Ascending aorta (tissue), 2 donors: ENCODE measurements at regions of chr12 and their contacts with region 1.

Region 1: GRCh38 chr12:810671-811415 is 58.5 kb downstream of the WNK1 start:
- DNase-seq: no peak
- H3K4me3 ChIP-seq: no peak overlapping the region
- H3K27ac ChIP-seq: no peak overlapping the region
- H3K4me1 ChIP-seq: peaks cover 2 to 28% of the 10 kb centered on the region in 2 donors
- H3K27me3 ChIP-seq: no peaks in the 10 kb centered on the region
- CTCF ChIP-seq: no peak

Region 2: DNA sequence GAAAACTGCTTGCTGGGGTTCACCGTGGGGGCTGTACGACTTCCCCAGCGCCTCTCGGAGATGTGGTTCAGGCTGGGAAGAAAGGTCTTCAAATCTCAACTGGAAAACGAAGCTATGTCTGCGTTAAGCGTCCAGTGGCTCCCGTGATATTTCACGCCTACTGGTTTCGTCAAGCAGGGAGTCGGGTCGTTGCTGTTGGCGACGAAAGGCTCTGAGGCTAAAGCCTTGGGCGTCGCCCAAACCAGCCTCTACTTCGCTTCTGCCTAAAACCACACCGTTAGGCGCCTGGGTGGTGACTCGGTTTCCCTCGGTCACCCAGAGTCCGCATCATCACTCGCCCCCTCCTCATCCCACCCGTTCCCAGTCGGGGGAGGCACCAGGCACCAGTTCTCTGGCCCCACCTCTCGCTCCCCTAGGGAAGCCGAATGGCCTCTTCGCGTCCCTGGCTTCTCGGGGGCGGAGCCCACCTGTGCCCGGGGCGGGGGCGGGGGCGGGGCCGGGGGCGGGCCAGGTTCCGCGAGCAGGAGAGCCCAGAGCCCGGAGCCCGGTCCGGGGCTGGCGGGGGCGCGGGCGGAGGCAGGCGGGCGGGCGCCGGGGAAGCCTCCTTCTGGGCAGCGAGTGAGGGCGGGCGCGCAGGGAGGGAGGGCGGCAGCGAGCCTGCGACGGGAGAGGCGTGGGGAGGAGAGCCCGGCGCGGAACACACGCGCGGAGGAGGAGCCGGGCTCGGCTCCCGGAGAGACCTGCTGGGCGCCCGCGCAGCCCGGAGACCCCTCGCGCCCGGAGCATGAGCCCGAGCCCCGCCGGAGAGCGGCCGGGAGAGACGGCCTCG is 351.2 kb before region 1 on chr12 and contains the start of gene B4GALNT3:
- intact Hi-C with region 1: loop called (anchors 10 kb)
- DNase-seq: peak; percentile 23 to 86
- H3K4me3 ChIP-seq: peak within 1 kb of the TSS; percentile 85 to 92
- H3K27ac ChIP-seq: peak within 1 kb of the TSS; percentile 81 to 90
- H3K4me1 ChIP-seq: peaks cover 5 to 12% of the 10 kb centered on the region in 2 donors
- H3K27me3 ChIP-seq: no peaks in the 10 kb centered on the region
- CTCF ChIP-seq: no peak
- total RNA-seq, gene B4GALNT3: 10.4 TPM

Region 3: GRCh38 chr12:569803-570434 is 240.9 kb before region 1 on chr12:
- intact Hi-C with region 1: loop called (anchors 1 kb)
- DNase-seq: peak in 1 of 2 donors; percentile 95
- H3K4me3 ChIP-seq: peak overlapping the region; percentile 68 to 77
- H3K27ac ChIP-seq: peak overlapping the region; percentile 93 to 97
- H3K4me1 ChIP-seq: peaks cover 7 to 21% of the 10 kb centered on the region in 2 donors
- H3K27me3 ChIP-seq: no peaks in the 10 kb centered on the region
- CTCF ChIP-seq: peak; percentile 94 to 95 (median 94)

Region 4: GRCh38 chr12:575948-576612 is 234.8 kb before region 1 on chr12:
- intact Hi-C with region 1: loop called (anchors 2 kb)
- DNase-seq: peak; percentile 42 to 88
- H3K4me3 ChIP-seq: peak overlapping the region in 1 of 2 donors; percentile 31
- H3K27ac ChIP-seq: peak overlapping the region; percentile 70 to 81
- H3K4me1 ChIP-seq: peaks cover 15 to 29% of the 10 kb centered on the region in 2 donors
- H3K27me3 ChIP-seq: no peaks in the 10 kb centered on the region
- CTCF ChIP-seq: peak; percentile 99 to 100 (median 100)

Region 5: DNA sequence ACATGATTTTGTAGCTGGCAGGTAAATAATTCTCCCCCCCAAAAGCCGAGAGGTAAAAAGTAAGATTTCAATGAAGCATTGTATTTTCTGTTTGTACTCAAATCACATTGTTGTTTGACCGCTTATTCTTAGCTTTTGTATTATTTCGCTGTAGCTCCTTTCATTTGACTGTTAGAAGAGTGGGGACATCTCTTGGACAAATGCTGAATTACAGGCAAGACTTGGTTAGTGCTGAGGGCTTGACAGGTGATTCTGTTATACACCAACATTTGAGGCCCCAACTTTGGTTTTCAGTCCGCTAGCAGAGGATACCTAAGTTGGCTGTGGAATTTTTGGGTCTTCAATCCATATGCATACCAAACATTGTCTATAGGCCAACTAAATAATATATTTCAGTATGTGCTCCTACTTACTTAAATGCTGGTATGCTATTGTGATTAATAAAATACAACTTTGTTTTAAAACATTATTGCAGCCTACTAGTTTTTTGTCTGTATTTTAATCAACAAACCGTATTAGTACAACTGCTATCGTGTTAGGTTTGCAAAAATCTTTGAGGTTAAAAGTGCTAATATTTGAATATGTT is 282.4 kb after region 1 on chr12:
- intact Hi-C with region 1: loop called (anchors 10 kb)
- DNase-seq: no peak
- H3K4me3 ChIP-seq: no peak overlapping the region
- H3K27ac ChIP-seq: no peak overlapping the region
- H3K4me1 ChIP-seq: peaks cover 0 to 3% of the 10 kb centered on the region in 2 donors
- H3K27me3 ChIP-seq: no peaks in the 10 kb centered on the region
- CTCF ChIP-seq: peak; percentile 51 to 82 (median 78)